ENCODE measurements at regions of chr2 and their contacts with region 1.

Region 1: DNA sequence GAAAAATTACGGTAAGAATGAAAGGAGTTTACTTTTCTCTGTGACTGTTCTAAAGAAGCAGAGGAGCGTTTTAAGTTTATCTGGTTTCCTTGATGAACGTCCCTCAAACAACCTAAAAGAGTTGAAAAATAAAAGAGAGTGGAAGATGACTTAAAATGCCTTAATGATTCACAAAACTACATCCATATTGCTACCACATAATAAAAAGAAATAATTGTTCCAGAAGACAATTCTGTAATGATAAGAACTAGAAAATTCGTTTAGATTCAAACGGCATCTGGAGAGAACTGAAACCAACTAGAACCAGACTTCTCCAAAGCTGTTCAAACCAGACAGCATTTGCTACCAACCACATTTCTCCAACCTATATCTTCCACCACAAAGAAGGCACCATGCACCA is 68.1 kb downstream of the TEKT4 start:
- DNase-seq: no peak
- H3K4me3 ChIP-seq: no peak overlapping the region
- H3K27ac ChIP-seq: no peak overlapping the region
- H3K4me1 ChIP-seq: no peaks in the 10 kb centered on the region
- H3K27me3 ChIP-seq: peaks cover 100% of the 10 kb centered on the region
- CTCF ChIP-seq: no peak

Region 2: DNA sequence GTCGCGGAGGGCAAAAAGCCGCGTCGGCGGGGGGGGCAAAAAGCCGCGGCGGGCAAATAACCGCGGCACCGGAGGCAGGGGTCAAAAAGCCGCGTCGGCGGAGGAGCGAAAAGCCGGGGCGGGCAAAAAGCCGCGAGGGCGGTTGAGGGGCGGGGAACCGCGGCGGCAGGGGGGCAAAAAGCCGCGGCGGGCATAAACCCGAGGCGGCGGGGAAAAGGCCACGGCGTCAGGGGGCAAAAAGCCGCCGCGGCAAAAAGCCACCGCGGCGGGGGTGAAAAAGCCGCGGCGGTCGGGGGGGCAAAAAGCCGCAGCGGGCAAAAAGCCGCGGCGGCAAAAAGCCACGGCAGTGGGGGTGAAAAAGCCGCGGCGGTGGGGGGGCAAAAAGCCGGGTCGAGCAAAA is 666.1 kb before region 1 on chr2:
- CTCF ChIA-PET with region 1: no interaction called
- POLR2A ChIA-PET with region 1: interaction called, 13 read pairs
- intact Hi-C with region 1: no loop called
- DNase-seq: no peak
- H3K4me3 ChIP-seq: no peak overlapping the region
- H3K27ac ChIP-seq: no peak overlapping the region
- H3K4me1 ChIP-seq: no peaks in the 10 kb centered on the region
- H3K27me3 ChIP-seq: no peaks in the 10 kb centered on the region
- CTCF ChIP-seq: no peak

Region 3: GRCh38 chr2:95012881-95013550 is 73.7 kb after region 1 on chr2:
- CTCF ChIA-PET with region 1: no interaction called
- POLR2A ChIA-PET with region 1: no interaction called
- intact Hi-C with region 1: no loop called
- DNase-seq: peak in 1 of 2 experiments; percentile 73
- H3K4me3 ChIP-seq: no peak overlapping the region
- H3K27ac ChIP-seq: no peak overlapping the region
- H3K4me1 ChIP-seq: peaks cover 17% of the 10 kb centered on the region
- H3K27me3 ChIP-seq: no peaks in the 10 kb centered on the region
- CTCF ChIP-seq: no peak

Region 4: DNA sequence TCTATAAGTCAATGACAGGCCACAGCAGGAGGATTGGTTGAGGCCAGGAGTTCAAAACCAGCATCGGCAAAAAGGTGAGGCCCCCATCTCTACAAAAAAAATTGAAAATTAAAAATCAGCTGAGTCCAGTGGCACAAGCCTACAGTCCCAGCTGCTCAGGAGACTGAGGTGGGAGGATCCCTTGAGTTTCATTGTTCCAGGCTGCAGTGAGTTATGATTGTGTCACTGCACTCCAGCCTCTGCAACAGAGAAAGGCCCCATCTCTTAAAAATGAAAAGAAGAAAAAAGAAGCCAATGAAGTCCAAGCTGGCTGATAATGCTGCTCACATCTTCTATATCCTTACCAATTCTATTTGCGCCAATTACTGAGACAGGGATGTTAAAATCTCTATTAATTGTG is 143.1 kb after region 1 on chr2:
- CTCF ChIA-PET with region 1: no interaction called
- POLR2A ChIA-PET with region 1: no interaction called
- intact Hi-C with region 1: loop called (anchors 5 kb)
- DNase-seq: no peak
- H3K4me3 ChIP-seq: no peak overlapping the region
- H3K27ac ChIP-seq: no peak overlapping the region
- H3K4me1 ChIP-seq: peaks cover 4% of the 10 kb centered on the region; the same call in 1 of the 2 replicates
- H3K27me3 ChIP-seq: no peaks in the 10 kb centered on the region
- CTCF ChIP-seq: no peak